Panc1 (cell line): ENCODE measurements at regions of chr1 and their contacts with region 1.

Region 1: GRCh38 chr1:107529502-107530149 is 388.8 kb downstream of the NTNG1 start:
- DNase-seq: peak; percentile 35
- ATAC-seq: peak; percentile 86
- H3K4me3 ChIP-seq: no peak overlapping the region
- H3K27ac ChIP-seq: no peak overlapping the region
- H3K4me1 ChIP-seq: no peaks in the 10 kb centered on the region
- H3K27me3 ChIP-seq: no peaks in the 10 kb centered on the region
- CTCF ChIP-seq: peak; percentile 75

Region 2: GRCh38 chr1:107277022-107277421 is 252.6 kb before region 1 on chr1:
- CTCF ChIA-PET with region 1: no interaction called
- POLR2A ChIA-PET with region 1: no interaction called
- in situ Hi-C with region 1: no loop called
- intact Hi-C with region 1: loop called (anchors 10 kb)
- DNase-seq: no peak
- ATAC-seq: no peak
- H3K4me3 ChIP-seq: no peak overlapping the region
- H3K27ac ChIP-seq: no peak overlapping the region
- H3K4me1 ChIP-seq: no peaks in the 10 kb centered on the region
- H3K27me3 ChIP-seq: no peaks in the 10 kb centered on the region
- CTCF ChIP-seq: peak; percentile 37

Region 3: GRCh38 chr1:107326824-107327445 is 202.7 kb before region 1 on chr1:
- CTCF ChIA-PET with region 1: no interaction called
- POLR2A ChIA-PET with region 1: no interaction called
- in situ Hi-C with region 1: no loop called
- intact Hi-C with region 1: no loop called
- DNase-seq: no peak
- ATAC-seq: no peak
- H3K4me3 ChIP-seq: no peak overlapping the region
- H3K27ac ChIP-seq: no peak overlapping the region
- H3K4me1 ChIP-seq: no peaks in the 10 kb centered on the region
- H3K27me3 ChIP-seq: no peaks in the 10 kb centered on the region
- CTCF ChIP-seq: no peak

Region 4: GRCh38 chr1:107342316-107342715 is 187.3 kb before region 1 on chr1:
- CTCF ChIA-PET with region 1: no interaction called
- POLR2A ChIA-PET with region 1: no interaction called
- in situ Hi-C with region 1: no loop called
- intact Hi-C with region 1: no loop called
- DNase-seq: no peak
- ATAC-seq: no peak
- H3K4me3 ChIP-seq: no peak overlapping the region
- H3K27ac ChIP-seq: no peak overlapping the region
- H3K4me1 ChIP-seq: no peaks in the 10 kb centered on the region
- H3K27me3 ChIP-seq: no peaks in the 10 kb centered on the region
- CTCF ChIP-seq: no peak

Region 5: DNA sequence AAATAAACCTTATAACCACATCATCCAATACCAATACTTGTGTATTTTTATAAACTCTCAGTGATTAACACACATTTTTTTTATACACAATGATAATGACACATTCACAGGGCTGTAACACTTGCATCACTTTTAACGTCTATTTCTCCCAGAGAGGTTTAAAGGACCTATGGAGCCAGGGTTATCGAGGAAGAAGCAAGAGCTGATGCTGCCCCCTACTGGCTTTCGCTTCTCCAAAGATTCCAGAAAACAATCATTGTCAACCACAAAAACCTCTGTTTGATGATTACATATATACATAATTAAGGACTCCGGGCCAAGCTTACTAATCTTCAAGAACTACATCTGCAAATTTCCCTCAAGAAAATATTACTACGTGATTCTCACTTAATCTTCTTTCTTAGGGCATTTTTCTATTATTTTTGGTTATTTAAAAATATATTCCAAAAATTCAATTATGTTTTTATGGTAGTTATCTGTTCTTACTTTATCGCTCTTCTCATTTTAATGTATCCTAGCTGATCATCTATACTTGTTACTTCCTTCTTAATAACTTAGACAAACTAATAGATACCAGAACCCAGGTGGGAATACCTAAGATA is 220.8 kb after region 1 on chr1:
- CTCF ChIA-PET with region 1: no interaction called
- POLR2A ChIA-PET with region 1: no interaction called
- in situ Hi-C with region 1: no loop called
- intact Hi-C with region 1: loop called (anchors 5 kb)
- DNase-seq: peak; percentile 22
- ATAC-seq: no peak
- H3K4me3 ChIP-seq: no peak overlapping the region
- H3K27ac ChIP-seq: no peak overlapping the region
- H3K4me1 ChIP-seq: no peaks in the 10 kb centered on the region
- H3K27me3 ChIP-seq: no peaks in the 10 kb centered on the region
- CTCF ChIP-seq: peak; percentile 67; the same call in 1 of the 2 replicates